Posterior vena cava (tissue), 2 donors: ENCODE measurements at regions of chr1 and their contacts with region 1.

Region 1: GRCh38 chr1:64121766-64122385 is 81.5 kb upstream of the UBE2U start:
- DNase-seq: no peak

Region 2: GRCh38 chr1:63969441-63969901 is 152.4 kb before region 1 on chr1:
- intact Hi-C with region 1: loop called in 1 of 2 experiments (anchors 10 kb)
- DNase-seq: no peak

Region 3: DNA sequence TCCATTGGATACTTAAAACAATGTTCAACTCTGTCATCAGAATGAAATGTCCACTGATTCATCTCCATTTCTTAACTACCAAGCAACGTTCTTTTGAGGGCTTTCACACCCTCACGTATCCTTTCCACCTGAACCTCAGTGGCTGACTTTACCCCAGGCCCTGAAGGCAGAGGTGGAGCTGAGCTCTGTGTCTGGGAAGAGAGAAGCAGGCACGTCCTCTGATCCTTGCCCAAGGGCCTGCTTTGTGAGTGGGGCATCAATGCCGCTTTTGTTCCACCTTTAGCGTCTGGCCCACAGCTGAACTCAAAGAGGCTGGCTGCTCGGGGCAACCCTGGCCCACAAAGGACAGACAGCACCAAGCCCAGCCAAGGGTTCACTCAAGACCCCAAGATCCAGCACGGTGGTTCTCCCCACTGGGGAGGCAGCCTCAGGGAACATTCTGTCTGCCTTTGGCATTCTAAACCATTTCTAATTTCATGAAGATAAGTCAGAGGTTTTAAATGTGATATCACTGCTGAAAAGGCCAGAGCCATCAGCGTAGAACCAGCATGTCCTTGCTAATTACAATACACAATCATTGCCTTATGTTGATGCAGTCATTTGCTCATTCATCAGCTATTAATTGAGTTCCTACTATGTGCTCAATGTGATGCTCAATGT is 44.5 kb before region 1 on chr1:
- intact Hi-C with region 1: loop called in 1 of 2 experiments (anchors 1 kb)
- DNase-seq: no peak